Transverse colon (tissue), 4 donors: ENCODE measurements at regions of chr20 and their contacts with region 1.

Region 1: GRCh38 chr20:13825465-13825864 is 40.6 kb downstream of the NDUFAF5 start:
- DNase-seq: no peak
- H3K4me3 ChIP-seq: no peak overlapping the region
- H3K27ac ChIP-seq: no peak overlapping the region
- H3K4me1 ChIP-seq: no peaks in the 10 kb centered on the region
- H3K27me3 ChIP-seq: no peaks in the 10 kb centered on the region
- CTCF ChIP-seq: no peak
- EP300 ChIP-seq: no peak
- POLR2A ChIP-seq: no peak

Region 2: DNA sequence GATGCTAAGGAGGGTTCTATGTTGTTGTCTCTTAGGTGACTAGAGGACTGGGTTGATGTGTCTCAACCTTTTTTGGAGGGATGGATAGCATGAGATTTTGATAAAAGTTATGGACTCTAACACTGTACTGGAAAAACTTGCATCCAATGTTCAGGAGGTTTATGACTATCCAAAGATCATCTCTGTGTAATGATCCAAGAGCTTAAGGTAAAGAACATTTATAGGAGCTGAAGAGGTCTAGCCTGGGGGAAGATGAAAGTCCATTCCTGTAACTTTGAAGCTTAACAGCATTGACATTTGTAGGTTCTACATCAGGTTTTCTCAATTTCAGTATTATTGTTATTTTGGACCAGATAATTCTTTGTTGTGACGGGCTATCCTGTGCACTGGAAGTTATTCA is 89.6 kb before region 1 on chr20:
- in situ Hi-C with region 1: no loop called
- intact Hi-C with region 1: no loop called
- DNase-seq: no peak
- H3K4me3 ChIP-seq: no peak overlapping the region
- H3K27ac ChIP-seq: peak overlapping the region; percentile 45 to 75 (median 54)
- H3K4me1 ChIP-seq: peaks cover 0 to 20% (median 6%) of the 10 kb centered on the region in 4 donors
- H3K27me3 ChIP-seq: no peaks in the 10 kb centered on the region
- CTCF ChIP-seq: no peak
- EP300 ChIP-seq: no peak
- POLR2A ChIP-seq: no peak

Region 3: GRCh38 chr20:15100506-15101160 is 1275.2 kb after region 1 on chr20:
- in situ Hi-C with region 1: no loop called
- intact Hi-C with region 1: loop called (anchors 5 kb)
- DNase-seq: no peak
- H3K4me3 ChIP-seq: no peak overlapping the region
- H3K27ac ChIP-seq: no peak overlapping the region
- H3K4me1 ChIP-seq: no peaks in the 10 kb centered on the region
- H3K27me3 ChIP-seq: no peaks in the 10 kb centered on the region
- CTCF ChIP-seq: no peak
- EP300 ChIP-seq: no peak
- POLR2A ChIP-seq: no peak